Right lobe of liver (tissue), 6 donors: ENCODE measurements at regions of chr11 and their contacts with region 1.

Region 1: DNA sequence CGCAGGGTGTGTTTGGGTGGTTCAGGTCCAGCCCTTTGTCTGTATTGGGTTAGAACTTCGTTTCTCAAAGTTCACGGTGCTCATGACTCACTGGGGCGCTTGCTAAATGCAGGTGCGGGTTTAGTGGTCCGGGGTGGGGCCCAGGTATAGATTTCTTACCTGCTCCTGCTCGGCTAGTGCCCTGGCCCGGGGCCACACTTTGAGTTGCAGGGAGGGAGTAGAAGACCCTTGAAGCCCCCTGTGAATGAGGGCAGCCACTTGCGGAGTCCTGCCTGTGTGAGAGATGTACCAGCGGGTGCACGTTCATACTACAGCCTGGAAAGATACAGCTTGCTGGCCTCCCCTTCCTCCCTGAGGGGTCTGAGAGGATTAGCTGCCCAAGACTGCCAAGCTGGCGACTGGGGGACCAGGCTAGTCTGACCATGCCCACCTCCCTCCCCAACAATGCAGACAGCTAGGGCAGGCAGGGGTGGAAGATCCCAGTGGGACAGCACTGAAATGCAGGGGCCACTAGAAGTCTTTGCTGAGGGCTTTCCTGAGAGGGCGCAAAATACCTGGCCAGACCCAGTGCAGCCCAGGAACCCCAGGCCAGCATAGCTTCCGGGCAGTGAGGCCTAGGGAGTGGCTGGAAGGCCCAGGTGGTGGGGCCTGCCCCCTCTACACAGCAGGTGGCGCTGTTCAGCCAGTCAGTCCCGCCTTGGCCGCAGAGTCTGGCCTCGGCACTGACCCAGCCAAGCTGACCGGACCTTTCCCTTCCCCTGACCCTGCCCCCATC is 5.1 kb upstream of the MYRF start:
- DNase-seq: peak; percentile 85 to 88 (median 86)
- ATAC-seq: peak; percentile 91 to 94 (median 92)
- H3K4me3 ChIP-seq: no peak overlapping the region
- H3K27ac ChIP-seq: no peak overlapping the region
- H3K4me1 ChIP-seq: peaks cover 0 to 6% (median 0%) of the 10 kb centered on the region in 4 donors
- H3K27me3 ChIP-seq: no peaks in the 10 kb centered on the region
- CTCF ChIP-seq: peak; percentile 92 to 96 (median 95)
- POLR2A ChIP-seq: no peak

Region 2: GRCh38 chr11:61783717-61784519 is 36.5 kb after region 1 on chr11:
- intact Hi-C with region 1: loop called (anchors 5 kb)
- DNase-seq: no peak
- ATAC-seq: no peak
- H3K4me3 ChIP-seq: no peak overlapping the region
- H3K27ac ChIP-seq: no peak overlapping the region
- H3K4me1 ChIP-seq: no peaks in the 10 kb centered on the region
- H3K27me3 ChIP-seq: no peaks in the 10 kb centered on the region
- CTCF ChIP-seq: no peak
- POLR2A ChIP-seq: no peak

Region 3: GRCh38 chr11:61795459-61795858 is 48.1 kb after region 1 on chr11:
- intact Hi-C with region 1: no loop called
- DNase-seq: peak in 1 of 3 donors; percentile 30
- ATAC-seq: no peak
- H3K4me3 ChIP-seq: no peak overlapping the region
- H3K27ac ChIP-seq: no peak overlapping the region
- H3K4me1 ChIP-seq: peaks cover 0 to 20% (median 3%) of the 10 kb centered on the region in 4 donors
- H3K27me3 ChIP-seq: no peaks in the 10 kb centered on the region
- CTCF ChIP-seq: no peak
- POLR2A ChIP-seq: no peak

Region 4: GRCh38 chr11:62298975-62299374 is 551.6 kb after region 1 on chr11 and contains the start of gene SCGB1D4:
- intact Hi-C with region 1: no loop called
- DNase-seq: no peak
- ATAC-seq: no peak
- H3K4me3 ChIP-seq: no peak within 1 kb of the TSS
- H3K27ac ChIP-seq: no peak within 1 kb of the TSS
- H3K4me1 ChIP-seq: no peaks in the 10 kb centered on the region
- H3K27me3 ChIP-seq: no peaks in the 10 kb centered on the region
- CTCF ChIP-seq: no peak
- POLR2A ChIP-seq: no peak
- total RNA-seq, gene SCGB1D4: not detected